ENCODE measurements at regions of chr22 and their contacts with region 1.

Region 1: GRCh38 chr22:29524440-29525191 is 28.9 kb downstream of the THOC5 start:
- DNase-seq: peak; percentile 35
- ATAC-seq: peak; percentile 64
- H3K4me3 Mint-ChIP-seq: no peak overlapping the region
- H3K27ac Mint-ChIP-seq: no peak overlapping the region
- H3K4me1 Mint-ChIP-seq: no peaks in the 10 kb centered on the region
- H3K27me3 Mint-ChIP-seq: no peaks in the 10 kb centered on the region
- CTCF ChIP-seq: no peak

Region 2: DNA sequence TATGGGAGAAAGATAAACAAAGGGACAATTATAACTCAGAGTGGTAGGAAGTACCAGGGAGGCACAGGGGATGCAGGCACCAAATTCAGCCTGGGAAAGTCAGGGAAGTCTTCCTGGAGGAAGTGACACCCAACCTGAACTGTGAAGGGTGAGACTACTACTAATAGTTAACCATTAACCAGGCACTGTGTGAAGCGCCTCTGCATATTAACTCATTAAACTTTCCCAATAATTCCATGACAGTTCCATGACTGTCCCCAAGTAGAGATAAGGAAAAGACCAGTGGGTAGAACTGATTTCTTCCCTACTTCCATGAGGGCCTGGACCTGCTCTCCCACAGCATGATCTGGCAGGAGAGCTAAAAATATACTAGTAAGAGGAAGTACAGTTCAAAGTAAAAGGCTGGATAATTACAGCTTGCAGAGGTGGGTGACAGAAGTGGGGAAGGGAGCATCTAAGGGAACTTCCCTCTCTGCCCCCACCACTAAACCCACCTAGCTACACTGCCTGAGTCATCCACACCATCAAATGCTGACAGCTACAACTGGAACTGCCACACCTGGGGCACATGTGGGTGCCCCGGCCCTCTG is 131.5 kb before region 1 on chr22:
- CTCF ChIA-PET with region 1: interaction called, 11 read pairs
- POLR2A ChIA-PET with region 1: no interaction called
- intact Hi-C with region 1: no loop called
- DNase-seq: no peak
- ATAC-seq: no peak
- H3K4me3 Mint-ChIP-seq: no peak overlapping the region
- H3K27ac Mint-ChIP-seq: no peak overlapping the region
- H3K4me1 Mint-ChIP-seq: peaks cover 10% of the 10 kb centered on the region
- H3K27me3 Mint-ChIP-seq: no peaks in the 10 kb centered on the region
- CTCF ChIP-seq: no peak

Region 3: GRCh38 chr22:29509815-29510214 is 14.8 kb before region 1 on chr22:
- CTCF ChIA-PET with region 1: no interaction called
- POLR2A ChIA-PET with region 1: no interaction called
- intact Hi-C with region 1: no loop called
- DNase-seq: no peak
- ATAC-seq: no peak
- H3K4me3 Mint-ChIP-seq: no peak overlapping the region
- H3K27ac Mint-ChIP-seq: peak overlapping the region; percentile 64
- H3K4me1 Mint-ChIP-seq: peaks cover 3% of the 10 kb centered on the region
- H3K27me3 Mint-ChIP-seq: no peaks in the 10 kb centered on the region
- CTCF ChIP-seq: no peak

Region 4: GRCh38 chr22:29635734-29636357 is 111.2 kb after region 1 on chr22:
- CTCF ChIA-PET with region 1: no interaction called
- POLR2A ChIA-PET with region 1: no interaction called
- intact Hi-C with region 1: no loop called
- DNase-seq: no peak
- ATAC-seq: peak; percentile 56
- H3K4me3 Mint-ChIP-seq: no peak overlapping the region
- H3K27ac Mint-ChIP-seq: no peak overlapping the region
- H3K4me1 Mint-ChIP-seq: peaks cover 28% of the 10 kb centered on the region
- H3K27me3 Mint-ChIP-seq: no peaks in the 10 kb centered on the region
- CTCF ChIP-seq: peak; percentile 66

Measured in activated CD8-positive, alpha-beta T cell treated with anti-CD3 and anti-CD28 coated beads for 36 hours (primary cell).